ENCODE measurements at regions of chr17 and their contacts with region 1.

Region 1: DNA sequence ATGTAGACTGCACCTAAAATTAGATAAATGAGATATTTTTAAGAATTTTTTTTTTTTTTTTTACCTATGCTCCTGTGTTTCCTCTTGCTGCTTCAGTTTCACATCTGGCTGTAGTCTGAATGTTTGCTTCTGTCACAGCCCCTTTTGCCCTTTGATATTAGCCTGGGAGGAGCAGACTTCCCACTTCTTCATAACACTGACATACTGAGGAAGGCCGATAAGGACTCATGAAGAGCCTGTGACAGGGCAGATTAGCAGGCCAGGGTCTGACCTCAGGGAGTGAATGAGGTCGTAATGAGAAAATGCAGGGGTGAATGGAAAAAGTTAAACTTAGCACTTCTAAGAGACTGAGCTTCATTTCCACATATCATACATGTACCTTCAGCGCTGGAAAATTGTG is at the start of gene SLFN14:
- DNase-seq: peak; percentile 95 to 99 (median 96)
- H3K4me3 ChIP-seq: peak within 1 kb of the TSS in 4 of 7 experiments; percentile 12 to 63 (median 43)
- H3K27ac ChIP-seq: peak within 1 kb of the TSS; percentile 40 to 79
- H3K4me1 ChIP-seq: peaks cover 21 to 54% (median 48%) of the 10 kb centered on the region in 4 experiments
- H3K27me3 ChIP-seq: no peaks in the 10 kb centered on the region

Region 2: GRCh38 chr17:35578197-35578928 is 17.7 kb after region 1 on chr17 and contains the start of gene PEX12:
- CTCF ChIA-PET with region 1: interaction called, 7 read pairs
- POLR2A ChIA-PET with region 1: interaction called, 20 read pairs
- DNase-seq: peak; percentile 86 to 90 (median 88)
- H3K4me3 ChIP-seq: peak within 1 kb of the TSS; percentile 71 to 95 (median 91)
- H3K27ac ChIP-seq: peak within 1 kb of the TSS; percentile 54 to 87
- H3K4me1 ChIP-seq: peaks cover 8 to 25% (median 15%) of the 10 kb centered on the region in 4 experiments
- H3K27me3 ChIP-seq: no peaks in the 10 kb centered on the region

Measured in common myeloid progenitor, CD34-positive (primary cell).